Activated CD4-positive, alpha-beta memory T cell treated with anti-CD3 and anti-CD28 coated beads for 36 hours (primary cell): ENCODE measurements at regions of chr7 and their contacts with region 1.

Region 1: DNA sequence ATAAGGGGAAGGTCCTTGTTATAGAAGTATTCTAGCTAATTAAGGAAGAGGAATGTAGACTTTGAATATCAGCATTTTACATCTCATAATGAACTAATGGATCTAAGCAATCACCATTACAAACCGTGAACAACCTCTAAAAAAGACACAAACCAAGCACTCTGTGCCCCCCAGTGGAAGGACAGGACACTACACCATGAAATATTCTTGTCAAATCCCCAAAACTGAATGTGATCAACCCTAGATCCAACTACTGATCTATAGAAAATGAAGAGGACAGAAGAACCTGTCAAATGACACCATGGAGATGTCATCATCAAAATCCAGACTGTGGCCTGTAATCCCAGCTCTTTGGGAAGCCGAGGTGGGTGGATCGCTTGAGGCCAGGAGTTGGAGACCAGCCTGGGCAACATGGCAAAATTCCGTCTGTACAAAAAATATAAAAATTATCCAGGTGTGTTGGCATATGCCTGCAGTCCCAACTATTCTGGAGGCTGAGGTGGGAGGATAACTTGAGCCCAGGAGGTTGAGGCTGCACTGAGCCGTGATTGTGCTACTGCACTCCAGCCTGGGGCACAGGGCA is 111.3 kb upstream of the CARD11 start:
- DNase-seq: peak; percentile 70
- H3K4me3 Mint-ChIP-seq: no peak overlapping the region
- H3K27ac Mint-ChIP-seq: peak overlapping the region; percentile 19
- H3K4me1 Mint-ChIP-seq: peaks cover 19% of the 10 kb centered on the region
- H3K27me3 Mint-ChIP-seq: peaks cover 2% of the 10 kb centered on the region

Region 2: DNA sequence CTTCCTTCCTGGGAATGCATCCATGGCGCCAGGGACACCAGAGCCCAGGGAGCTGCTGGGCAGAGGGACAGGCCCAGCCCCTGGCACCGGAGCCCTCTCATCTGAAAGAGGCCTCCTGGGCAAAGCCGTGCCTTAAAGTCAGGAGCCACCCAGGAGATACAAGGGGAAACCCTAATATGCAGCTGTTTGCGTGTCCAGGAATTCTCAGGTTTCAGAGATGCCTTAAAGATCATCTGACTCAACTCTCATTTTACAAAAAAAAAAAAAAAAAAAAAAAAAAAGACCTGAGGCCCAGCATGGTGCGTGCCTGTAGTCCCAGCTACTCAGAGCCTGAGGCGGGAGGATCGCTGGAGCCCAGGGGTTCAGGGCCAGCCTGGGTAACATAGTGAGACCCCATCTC is 884.9 kb before region 1 on chr7:
- CTCF ChIA-PET with region 1: no interaction called
- POLR2A ChIA-PET with region 1: no interaction called
- intact Hi-C with region 1: no loop called
- DNase-seq: no peak
- H3K4me3 Mint-ChIP-seq: no peak overlapping the region
- H3K27ac Mint-ChIP-seq: no peak overlapping the region
- H3K4me1 Mint-ChIP-seq: no peaks in the 10 kb centered on the region
- H3K27me3 Mint-ChIP-seq: no peaks in the 10 kb centered on the region

Region 3: DNA sequence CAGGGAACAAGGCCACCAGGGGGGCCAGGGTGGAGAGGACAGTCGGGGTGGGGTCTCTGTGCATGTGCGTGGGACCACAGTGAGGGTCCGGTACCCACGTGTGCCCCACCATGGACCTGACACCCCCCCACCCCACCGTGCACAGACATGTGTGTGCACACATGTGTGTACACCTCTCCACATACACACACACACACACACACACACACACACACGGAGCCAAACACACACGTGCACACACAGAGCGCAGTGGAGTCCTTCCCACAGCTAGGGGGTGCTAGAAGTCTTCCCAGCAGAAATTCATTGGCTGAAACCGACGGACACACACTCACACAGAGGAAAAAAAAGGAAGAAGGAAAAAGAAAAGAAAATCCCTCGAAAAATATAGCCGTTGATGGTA is 268.1 kb before region 1 on chr7:
- CTCF ChIA-PET with region 1: interaction called, 31 read pairs
- POLR2A ChIA-PET with region 1: no interaction called
- intact Hi-C with region 1: loop called (anchors 1 kb)
- DNase-seq: peak; percentile 70
- H3K4me3 Mint-ChIP-seq: no peak overlapping the region
- H3K27ac Mint-ChIP-seq: no peak overlapping the region
- H3K4me1 Mint-ChIP-seq: peaks cover 3% of the 10 kb centered on the region
- H3K27me3 Mint-ChIP-seq: no peaks in the 10 kb centered on the region

Region 4: GRCh38 chr7:2894118-2894940 is 260.7 kb before region 1 on chr7:
- CTCF ChIA-PET with region 1: interaction called, 10 read pairs
- POLR2A ChIA-PET with region 1: no interaction called
- intact Hi-C with region 1: no loop called
- DNase-seq: peak; percentile 84
- H3K4me3 Mint-ChIP-seq: peak overlapping the region; percentile 73
- H3K27ac Mint-ChIP-seq: peak overlapping the region; percentile 94
- H3K4me1 Mint-ChIP-seq: peaks cover 23% of the 10 kb centered on the region
- H3K27me3 Mint-ChIP-seq: no peaks in the 10 kb centered on the region

Region 5: DNA sequence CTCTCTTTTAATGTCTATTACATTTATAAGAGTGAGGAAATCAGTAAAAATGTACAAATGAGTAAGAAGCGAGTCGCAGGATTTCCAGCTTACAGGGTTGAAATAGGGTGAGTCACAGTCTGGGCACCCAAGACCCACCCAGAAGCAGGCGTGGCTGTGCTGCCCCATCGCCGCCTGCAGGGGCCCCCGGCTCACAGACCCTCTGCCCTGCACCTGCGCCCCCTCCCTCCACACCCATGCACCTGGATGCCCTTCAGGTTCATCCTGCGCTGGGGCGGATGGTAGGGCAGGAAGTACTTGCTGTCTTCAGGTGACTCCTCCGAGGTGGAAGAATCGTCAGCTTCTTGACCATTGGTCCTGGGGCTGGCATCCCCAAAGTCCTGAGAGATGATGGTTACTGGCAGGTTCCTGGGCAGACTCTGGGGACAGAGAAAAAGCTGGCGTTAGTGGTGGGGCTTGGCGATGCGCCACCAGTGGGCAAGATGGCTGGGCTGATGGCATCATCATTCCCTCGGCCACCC is 220.7 kb before region 1 on chr7:
- CTCF ChIA-PET with region 1: interaction called, 10 read pairs
- POLR2A ChIA-PET with region 1: no interaction called
- intact Hi-C with region 1: no loop called
- DNase-seq: peak; percentile 60
- H3K4me3 Mint-ChIP-seq: no peak overlapping the region
- H3K27ac Mint-ChIP-seq: peak overlapping the region; percentile 92
- H3K4me1 Mint-ChIP-seq: peaks cover 14% of the 10 kb centered on the region
- H3K27me3 Mint-ChIP-seq: no peaks in the 10 kb centered on the region

Region 6: DNA sequence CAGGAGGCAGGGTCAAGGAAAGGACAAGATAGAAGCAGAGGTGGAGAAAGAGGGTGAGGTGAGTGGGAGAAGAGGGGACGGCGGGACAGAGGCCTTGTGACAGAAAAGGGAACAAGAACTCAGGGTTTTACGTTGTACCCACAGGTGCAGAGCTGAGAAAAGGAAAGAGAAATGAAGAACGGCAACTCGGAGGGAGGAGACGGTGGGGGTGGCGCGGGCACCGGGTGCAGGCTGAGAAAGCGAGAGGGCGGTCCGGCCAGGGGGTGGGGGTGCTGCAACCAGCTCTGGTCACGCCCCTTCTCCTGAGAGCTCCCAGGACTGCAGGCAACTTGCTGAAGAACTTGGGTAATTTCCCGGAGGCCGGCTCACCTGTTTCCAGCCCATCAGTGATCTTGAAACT is 176.6 kb before region 1 on chr7:
- CTCF ChIA-PET with region 1: no interaction called
- POLR2A ChIA-PET with region 1: interaction called, 3 read pairs
- intact Hi-C with region 1: loop called (anchors 10 kb)
- DNase-seq: peak; percentile 97
- H3K4me3 Mint-ChIP-seq: peak overlapping the region; percentile 63
- H3K27ac Mint-ChIP-seq: peak overlapping the region; percentile 91
- H3K4me1 Mint-ChIP-seq: peaks cover 69% of the 10 kb centered on the region
- H3K27me3 Mint-ChIP-seq: no peaks in the 10 kb centered on the region

Region 7: GRCh38 chr7:3013975-3014792 is 140.8 kb before region 1 on chr7:
- CTCF ChIA-PET with region 1: no interaction called
- POLR2A ChIA-PET with region 1: no interaction called
- intact Hi-C with region 1: no loop called
- DNase-seq: no peak
- H3K4me3 Mint-ChIP-seq: no peak overlapping the region
- H3K27ac Mint-ChIP-seq: no peak overlapping the region
- H3K4me1 Mint-ChIP-seq: peaks cover 50% of the 10 kb centered on the region
- H3K27me3 Mint-ChIP-seq: no peaks in the 10 kb centered on the region

Region 8: GRCh38 chr7:3092468-3092867 is 62.5 kb before region 1 on chr7:
- CTCF ChIA-PET with region 1: interaction called, 35 read pairs
- POLR2A ChIA-PET with region 1: no interaction called
- intact Hi-C with region 1: loop called (anchors 2 kb)
- DNase-seq: peak; percentile 91
- H3K4me3 Mint-ChIP-seq: peak overlapping the region; percentile 27
- H3K27ac Mint-ChIP-seq: peak overlapping the region; percentile 89
- H3K4me1 Mint-ChIP-seq: peaks cover 70% of the 10 kb centered on the region
- H3K27me3 Mint-ChIP-seq: no peaks in the 10 kb centered on the region

Region 9: DNA sequence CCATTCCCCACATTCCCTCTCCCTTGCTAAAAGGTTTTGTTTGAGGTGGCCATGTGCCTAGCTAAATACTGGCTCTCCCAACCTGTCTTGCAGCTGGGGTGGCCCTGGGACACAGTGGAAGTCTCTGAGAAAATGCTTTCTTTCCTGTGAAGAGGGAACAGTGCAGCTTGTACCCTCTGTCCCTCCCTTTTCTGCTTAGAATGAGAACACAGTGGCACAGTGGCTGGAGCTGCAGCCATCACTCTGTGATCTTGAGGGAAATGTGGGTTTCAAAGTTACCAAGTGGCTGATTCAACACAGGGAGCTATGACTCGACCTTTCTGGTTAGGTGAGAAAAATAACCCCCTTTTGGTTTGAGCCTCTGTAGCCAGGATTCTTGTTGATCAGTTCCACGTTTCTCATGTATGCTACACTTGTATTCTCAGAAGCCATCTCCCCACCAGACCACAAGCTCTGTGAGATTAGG is 48.6 kb before region 1 on chr7:
- CTCF ChIA-PET with region 1: no interaction called
- POLR2A ChIA-PET with region 1: no interaction called
- intact Hi-C with region 1: loop called (anchors 5 kb)
- DNase-seq: peak; percentile 80
- H3K4me3 Mint-ChIP-seq: no peak overlapping the region
- H3K27ac Mint-ChIP-seq: peak overlapping the region; percentile 84
- H3K4me1 Mint-ChIP-seq: peaks cover 70% of the 10 kb centered on the region
- H3K27me3 Mint-ChIP-seq: no peaks in the 10 kb centered on the region